Heart right ventricle (tissue), 16 donors: ENCODE measurements at regions of chr13 and their contacts with region 1.

Region 1: GRCh38 chr13:28246891-28247290 is 108.5 kb downstream of the PAN3 start:
- DNase-seq: no peak
- ATAC-seq: no peak
- H3K4me3 ChIP-seq: no peak overlapping the region
- H3K27ac ChIP-seq: no peak overlapping the region
- H3K4me1 ChIP-seq: peaks cover 0 to 29% (median 4%) of the 10 kb centered on the region in 9 donors
- H3K27me3 ChIP-seq: no peaks in the 10 kb centered on the region
- CTCF ChIP-seq: no peak

Region 2: GRCh38 chr13:28147495-28147894 is 99.4 kb before region 1 on chr13:
- intact Hi-C with region 1: loop called in 1 of 10 experiments (anchors 10 kb)
- DNase-seq: no peak
- ATAC-seq: no peak
- H3K4me3 ChIP-seq: no peak overlapping the region
- H3K27ac ChIP-seq: no peak overlapping the region
- H3K4me1 ChIP-seq: peaks cover 0 to 28% (median 15%) of the 10 kb centered on the region in 9 donors
- H3K27me3 ChIP-seq: no peaks in the 10 kb centered on the region
- CTCF ChIP-seq: no peak

Region 3: GRCh38 chr13:28485551-28485950 is 238.7 kb after region 1 on chr13:
- intact Hi-C with region 1: no loop called
- DNase-seq: no peak
- ATAC-seq: no peak
- H3K4me3 ChIP-seq: no peak overlapping the region
- H3K27ac ChIP-seq: no peak overlapping the region
- H3K4me1 ChIP-seq: peaks cover 3 to 89% (median 45%) of the 10 kb centered on the region in 9 donors
- H3K27me3 ChIP-seq: peaks cover 0 to 38% (median 9%) of the 10 kb centered on the region in 7 donors
- CTCF ChIP-seq: no peak